T-cell (primary cell): ENCODE measurements at regions of chr11 and their contacts with region 1.

Region 1: GRCh38 chr11:3841426-3842350 is 929 bp upstream of the RHOG start:
- DNase-seq: peak in 34 of 35 experiments; percentile 88 to 98 (median 96)
- ATAC-seq: peak; percentile 77 to 82 (median 78)
- H3K4me3 ChIP-seq: peak overlapping the region in 1 of 2 donors; percentile 88
- H3K4me3 Mint-ChIP-seq: peak overlapping the region; percentile 85 to 89 (median 86)
- H3K27ac ChIP-seq: peak overlapping the region; percentile 98
- H3K27ac Mint-ChIP-seq: peak overlapping the region; percentile 96
- H3K4me1 ChIP-seq: peaks cover 44 to 48% of the 10 kb centered on the region in 2 experiments
- H3K4me1 Mint-ChIP-seq: peaks cover 56 to 60% (median 56%) of the 10 kb centered on the region in 3 donors
- H3K27me3 ChIP-seq: no peaks in the 10 kb centered on the region
- H3K27me3 Mint-ChIP-seq: no peaks in the 10 kb centered on the region

Region 2: DNA sequence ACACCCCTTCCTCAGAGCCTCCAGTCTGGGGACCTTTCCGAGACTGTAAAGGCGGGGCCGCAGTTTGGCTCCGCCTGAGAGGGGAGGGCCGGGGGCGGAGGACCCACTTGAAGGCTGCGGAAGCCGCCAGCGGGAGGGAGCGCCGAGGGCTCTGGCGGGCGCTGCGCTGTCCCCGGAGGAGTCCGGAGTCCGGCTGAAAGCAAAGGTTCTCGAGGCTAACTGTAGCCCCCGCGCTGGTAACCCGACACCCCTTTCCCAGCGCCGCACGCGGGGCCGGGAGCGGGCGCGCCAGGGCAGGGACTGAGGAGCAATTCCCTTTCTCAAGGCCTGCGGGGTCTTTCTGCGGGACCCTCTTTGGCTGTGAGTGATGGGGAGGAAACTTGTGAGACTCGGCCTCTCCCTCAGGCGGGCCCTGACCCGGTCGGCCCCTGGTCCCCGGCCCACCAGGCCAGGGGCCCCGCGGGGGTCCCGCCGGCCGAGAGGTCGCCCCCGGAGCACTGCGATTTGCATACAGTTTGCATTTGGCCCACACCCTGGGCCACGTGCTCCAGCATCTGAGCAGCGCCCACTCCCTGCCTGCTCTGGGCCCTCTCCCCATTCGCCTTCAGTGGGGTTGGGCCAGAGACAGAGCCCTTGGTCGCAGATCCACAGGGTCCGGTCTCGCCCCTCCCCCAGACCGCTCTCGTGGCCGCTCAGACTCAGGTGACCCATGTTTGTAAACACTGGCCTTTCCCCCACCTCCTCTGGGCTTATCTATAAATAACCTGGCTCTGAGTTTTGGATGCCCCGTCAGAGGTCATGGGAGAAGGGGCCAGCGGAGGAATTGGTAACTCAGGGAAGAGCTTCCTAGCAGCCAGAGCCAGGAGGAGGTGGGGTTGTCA is 199.4 kb before region 1 on chr11:
- CTCF ChIA-PET with region 1: no interaction called
- POLR2A ChIA-PET with region 1: no interaction called
- DNase-seq: peak; percentile 25 to 87 (median 72)
- ATAC-seq: peak; percentile 83 to 99 (median 92)
- H3K4me3 ChIP-seq: peak overlapping the region; percentile 54 to 63
- H3K4me3 Mint-ChIP-seq: peak overlapping the region; percentile 77 to 82 (median 80)
- H3K27ac ChIP-seq: no peak overlapping the region
- H3K27ac Mint-ChIP-seq: peak overlapping the region in 1 of 2 donors; percentile 28
- H3K4me1 ChIP-seq: peaks cover 0 to 15% of the 10 kb centered on the region in 2 experiments
- H3K4me1 Mint-ChIP-seq: peaks cover 9 to 12% (median 10%) of the 10 kb centered on the region in 3 donors
- H3K27me3 ChIP-seq: peaks cover 6 to 63% of the 10 kb centered on the region in 2 experiments
- H3K27me3 Mint-ChIP-seq: peaks cover 25 to 28% of the 10 kb centered on the region in 2 donors

Region 3: GRCh38 chr11:3824714-3825472 is 16.8 kb before region 1 on chr11:
- CTCF ChIA-PET with region 1: interaction called, 3 to 13 read pairs
- POLR2A ChIA-PET with region 1: interaction called, 3 to 9 read pairs
- DNase-seq: peak; percentile 65 to 88 (median 80)
- ATAC-seq: peak; percentile 89 to 94 (median 92)
- H3K4me3 ChIP-seq: no peak overlapping the region
- H3K4me3 Mint-ChIP-seq: no peak overlapping the region
- H3K27ac ChIP-seq: peak overlapping the region; percentile 32
- H3K27ac Mint-ChIP-seq: peak overlapping the region; percentile 83 to 88
- H3K4me1 ChIP-seq: peaks cover 2 to 22% of the 10 kb centered on the region in 2 experiments
- H3K4me1 Mint-ChIP-seq: peaks cover 38 to 48% (median 41%) of the 10 kb centered on the region in 3 donors
- H3K27me3 ChIP-seq: no peaks in the 10 kb centered on the region
- H3K27me3 Mint-ChIP-seq: no peaks in the 10 kb centered on the region

Region 4: DNA sequence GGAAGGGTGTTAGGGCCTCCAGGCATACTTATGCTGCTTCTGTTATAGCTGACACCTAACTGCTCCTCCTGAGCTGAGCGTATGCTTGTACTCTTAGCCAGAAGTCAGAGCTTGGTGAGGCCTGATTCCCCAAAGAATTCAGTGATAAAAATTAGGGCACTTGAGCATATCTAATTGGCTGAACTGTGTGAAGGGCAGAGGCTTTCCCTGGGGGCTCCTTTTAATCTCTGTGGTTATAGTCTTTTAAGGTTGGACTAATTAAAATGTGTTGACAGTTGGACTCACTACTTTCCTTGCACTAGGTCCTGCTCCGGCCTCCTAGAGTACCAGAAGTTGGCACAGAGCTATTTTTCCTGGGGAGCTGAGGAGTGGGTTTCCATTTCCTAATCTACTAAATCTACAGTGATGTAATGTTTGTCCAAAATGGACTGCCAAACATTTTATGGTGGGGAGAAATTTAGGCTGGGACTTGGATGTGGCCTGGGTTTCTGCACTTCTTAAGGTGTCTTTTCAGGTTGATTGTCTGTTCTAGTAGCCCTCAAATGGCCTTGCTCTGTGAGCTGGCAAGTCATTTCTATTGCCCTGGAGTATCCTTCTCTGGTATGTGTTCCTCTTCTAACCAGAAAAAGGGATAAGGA is 32.1 kb after region 1 on chr11:
- CTCF ChIA-PET with region 1: interaction called, 6 to 10 read pairs
- POLR2A ChIA-PET with region 1: interaction called in 1 of 2 experiments, 3 read pairs
- DNase-seq: no peak
- ATAC-seq: no peak
- H3K4me3 ChIP-seq: no peak overlapping the region
- H3K4me3 Mint-ChIP-seq: no peak overlapping the region
- H3K27ac ChIP-seq: no peak overlapping the region
- H3K27ac Mint-ChIP-seq: peak overlapping the region; percentile 55 to 71
- H3K4me1 ChIP-seq: peaks cover 26 to 28% of the 10 kb centered on the region in 2 experiments
- H3K4me1 Mint-ChIP-seq: peaks cover 90 to 92% (median 91%) of the 10 kb centered on the region in 3 donors
- H3K27me3 ChIP-seq: no peaks in the 10 kb centered on the region
- H3K27me3 Mint-ChIP-seq: no peaks in the 10 kb centered on the region

Region 5: DNA sequence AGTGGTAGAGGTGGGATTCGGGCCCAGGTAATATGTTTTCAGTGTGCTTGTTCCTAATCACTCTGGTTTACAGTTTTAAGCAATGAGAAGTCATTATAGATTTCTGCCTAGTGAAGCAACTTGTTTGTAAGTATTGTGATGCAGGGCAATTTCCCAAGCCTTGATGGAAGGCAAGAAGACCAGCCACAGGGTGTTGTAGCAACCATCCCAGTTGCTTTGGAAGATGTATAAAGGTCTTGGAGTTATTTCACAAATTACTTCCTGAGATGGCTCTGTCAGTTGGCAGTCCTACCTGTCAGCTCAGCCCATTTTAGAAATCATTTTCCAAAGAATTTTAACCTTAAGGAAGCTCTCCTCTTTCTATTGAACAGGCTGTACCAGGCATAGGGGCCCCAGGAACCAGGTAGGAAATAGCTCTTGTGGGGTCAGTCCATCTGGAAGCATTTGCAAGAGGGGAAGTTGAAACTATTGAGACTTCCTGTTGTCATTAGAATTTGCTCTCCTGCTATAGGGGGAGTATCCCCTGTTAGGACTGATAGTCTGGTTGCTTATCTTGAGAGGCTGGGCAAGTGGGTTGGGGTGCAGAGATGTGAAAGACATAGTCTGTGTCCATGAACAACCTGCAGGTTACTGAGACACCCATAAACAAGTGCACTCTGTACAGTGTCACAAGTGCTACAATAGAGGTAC is 61.7 kb after region 1 on chr11:
- CTCF ChIA-PET with region 1: interaction called in 1 of 2 experiments, 8 read pairs
- POLR2A ChIA-PET with region 1: interaction called in 1 of 2 experiments, 10 read pairs
- DNase-seq: no peak
- ATAC-seq: no peak
- H3K4me3 ChIP-seq: no peak overlapping the region
- H3K4me3 Mint-ChIP-seq: peak overlapping the region in 2 of 3 donors; percentile 14 to 52
- H3K27ac ChIP-seq: peak overlapping the region; percentile 54
- H3K27ac Mint-ChIP-seq: peak overlapping the region; percentile 88 to 89
- H3K4me1 ChIP-seq: peaks cover 41 to 52% of the 10 kb centered on the region in 2 experiments
- H3K4me1 Mint-ChIP-seq: peaks cover 78 to 80% (median 79%) of the 10 kb centered on the region in 3 donors
- H3K27me3 ChIP-seq: no peaks in the 10 kb centered on the region
- H3K27me3 Mint-ChIP-seq: no peaks in the 10 kb centered on the region

Region 6: GRCh38 chr11:3990406-3990805 is 148.7 kb after region 1 on chr11:
- CTCF ChIA-PET with region 1: interaction called in 1 of 2 experiments, 4 read pairs
- POLR2A ChIA-PET with region 1: interaction called in 1 of 2 experiments, 12 read pairs
- DNase-seq: no peak
- ATAC-seq: no peak
- H3K4me3 ChIP-seq: no peak overlapping the region
- H3K4me3 Mint-ChIP-seq: peak overlapping the region; percentile 32 to 49 (median 35)
- H3K27ac ChIP-seq: peak overlapping the region; percentile 48
- H3K27ac Mint-ChIP-seq: peak overlapping the region in 1 of 2 donors; percentile 80
- H3K4me1 ChIP-seq: peaks cover 7 to 11% of the 10 kb centered on the region in 2 experiments
- H3K4me1 Mint-ChIP-seq: peaks cover 72 to 77% (median 76%) of the 10 kb centered on the region in 3 donors
- H3K27me3 ChIP-seq: no peaks in the 10 kb centered on the region
- H3K27me3 Mint-ChIP-seq: no peaks in the 10 kb centered on the region